Activated naive CD4-positive, alpha-beta T cell treated with anti-CD3 and anti-CD28 coated beads for 36 hours (primary cell): ENCODE measurements at regions of chr1 and their contacts with region 1.

Region 1: DNA sequence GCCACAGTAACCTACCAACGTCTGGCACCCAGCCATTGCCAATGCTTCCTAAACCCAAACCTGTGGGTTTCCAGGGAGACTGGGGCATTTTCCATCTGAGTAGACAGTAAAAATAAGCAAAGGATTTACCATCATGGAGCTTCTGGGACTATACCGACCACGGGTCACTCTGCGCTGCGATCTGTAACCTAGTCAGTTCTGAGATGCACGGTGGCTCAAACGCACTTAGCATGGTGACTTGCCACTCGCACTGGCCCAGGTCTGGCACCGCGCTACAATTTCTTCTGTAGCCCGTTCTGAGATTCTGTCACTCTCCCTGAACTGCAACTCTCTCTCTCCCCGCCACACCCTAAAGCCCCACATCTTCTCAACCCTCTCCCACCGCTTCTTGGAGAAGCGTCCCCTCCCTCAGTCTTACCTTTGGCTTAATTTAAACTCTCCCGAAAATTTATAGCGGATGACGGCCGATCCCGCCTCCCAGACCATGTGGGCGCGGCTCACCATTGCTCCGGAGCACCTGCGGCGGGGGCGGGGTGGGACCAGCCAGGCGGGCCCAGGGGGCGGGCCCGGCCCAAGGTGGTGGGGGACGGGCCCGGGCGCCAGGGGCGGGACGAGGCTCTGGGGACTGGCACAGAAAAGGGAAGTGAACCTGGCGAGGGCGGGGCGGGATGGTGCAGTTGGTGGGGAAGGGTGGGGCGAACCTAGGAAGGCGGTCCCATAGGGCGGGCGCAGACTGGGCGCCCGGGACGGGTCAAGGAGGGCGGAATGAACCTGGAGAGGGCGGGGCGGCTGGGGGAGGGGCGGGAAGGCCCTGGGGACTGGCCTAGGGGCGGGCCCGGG is 493 bp upstream of the MAP3K21 start:
- DNase-seq: peak; percentile 93
- H3K4me3 Mint-ChIP-seq: peak overlapping the region; percentile 67
- H3K27ac Mint-ChIP-seq: no peak overlapping the region
- H3K4me1 Mint-ChIP-seq: peaks cover 10% of the 10 kb centered on the region
- H3K27me3 Mint-ChIP-seq: peaks cover 20% of the 10 kb centered on the region

Region 2: GRCh38 chr1:233045588-233045987 is 281.4 kb before region 1 on chr1:
- CTCF ChIA-PET with region 1: no interaction called
- intact Hi-C with region 1: no loop called
- DNase-seq: no peak
- H3K4me3 Mint-ChIP-seq: no peak overlapping the region
- H3K27ac Mint-ChIP-seq: no peak overlapping the region
- H3K4me1 Mint-ChIP-seq: no peaks in the 10 kb centered on the region
- H3K27me3 Mint-ChIP-seq: no peaks in the 10 kb centered on the region

Region 3: DNA sequence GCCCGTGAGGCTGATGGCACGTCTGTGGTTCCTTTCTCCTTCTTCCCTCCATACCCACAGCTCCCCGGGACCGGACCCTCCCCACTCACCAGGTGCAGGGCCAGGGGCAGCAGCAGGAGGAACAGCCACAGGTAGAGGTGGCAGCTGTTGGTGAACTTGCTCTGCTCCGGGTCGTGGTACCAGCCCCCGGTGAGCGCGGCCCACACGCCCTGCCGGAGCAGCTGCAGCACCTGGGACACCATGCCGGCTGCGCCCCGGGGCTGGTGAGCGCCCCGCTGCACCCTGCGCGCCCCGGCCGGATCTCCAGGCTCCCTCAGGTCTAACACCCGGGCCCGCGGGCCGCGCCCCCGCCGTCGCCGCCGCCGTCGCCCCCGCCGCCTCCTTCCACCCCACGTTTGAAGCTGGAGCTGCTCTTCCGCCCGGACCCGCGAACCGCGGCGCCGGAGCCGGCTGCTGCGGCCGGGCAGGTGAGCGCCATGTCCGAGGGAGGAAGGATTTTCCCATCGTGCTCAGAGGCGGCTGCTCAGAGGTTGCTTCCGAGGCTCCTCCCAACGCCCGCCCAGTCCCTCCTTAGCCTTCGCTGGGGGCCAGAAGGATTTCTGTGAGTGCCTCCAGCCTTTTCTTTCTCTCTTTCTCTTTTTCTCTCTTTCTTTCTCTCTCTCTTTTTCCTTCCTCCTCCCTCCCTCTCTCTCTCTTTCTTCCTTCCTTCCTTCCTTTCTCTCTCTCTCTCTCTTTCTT is 31.6 kb before region 1 on chr1 and contains the start of gene PCNX2:
- CTCF ChIA-PET with region 1: interaction called, 4 read pairs
- intact Hi-C with region 1: loop called (anchors 1 kb)
- DNase-seq: peak; percentile 77
- H3K4me3 Mint-ChIP-seq: peak within 1 kb of the TSS; percentile 91
- H3K27ac Mint-ChIP-seq: peak within 1 kb of the TSS; percentile 90
- H3K4me1 Mint-ChIP-seq: peaks cover 25% of the 10 kb centered on the region
- H3K27me3 Mint-ChIP-seq: no peaks in the 10 kb centered on the region
- total RNA-seq, gene PCNX2: 11.5 to 12.2 TPM